Activated CD4-positive, alpha-beta memory T cell treated with anti-CD3 and anti-CD28 coated beads for 36 hours (primary cell): ENCODE measurements at regions of chr5 and their contacts with region 1.

Region 1: DNA sequence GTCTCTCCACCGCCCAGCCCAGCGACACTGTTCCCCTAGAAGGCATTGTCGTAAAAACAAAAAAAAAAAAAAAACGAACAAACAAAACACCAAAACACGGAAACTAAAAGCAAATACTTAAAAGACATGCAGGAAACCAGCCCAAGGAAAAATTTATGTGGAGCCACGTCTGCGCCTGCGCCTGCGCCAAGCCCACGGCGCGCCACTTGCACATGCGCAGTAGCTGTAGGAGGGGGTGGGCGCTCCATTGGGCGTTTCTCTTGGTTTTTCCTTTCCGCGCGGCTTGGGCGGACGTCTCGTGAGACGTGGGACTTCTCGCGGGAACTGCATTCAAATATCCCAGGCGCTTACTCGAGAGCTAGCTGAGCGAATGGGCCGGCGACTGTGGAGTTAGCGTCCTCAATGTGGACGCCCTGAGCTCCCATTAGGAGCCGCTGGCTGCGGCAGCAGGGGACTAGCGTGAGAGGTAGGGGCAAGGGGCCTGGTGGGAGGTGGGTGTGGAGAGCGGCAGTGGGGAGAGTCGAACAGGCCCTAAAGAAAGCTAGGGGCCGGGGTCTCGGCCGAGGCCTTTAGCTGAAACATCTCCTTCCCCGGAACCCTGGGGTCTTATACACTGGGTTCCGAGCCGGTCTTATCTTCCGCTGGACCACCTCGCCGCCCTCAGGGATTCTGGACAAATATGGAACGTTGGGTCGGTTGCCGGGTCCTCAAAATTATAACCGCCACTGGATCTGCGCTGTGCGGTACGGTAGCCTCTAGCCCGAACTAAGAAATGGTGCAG is at the start of gene SPDL1:
- DNase-seq: peak; percentile 97
- H3K4me3 Mint-ChIP-seq: peak within 1 kb of the TSS; percentile 98
- H3K27ac Mint-ChIP-seq: peak within 1 kb of the TSS; percentile 84
- H3K4me1 Mint-ChIP-seq: peaks cover 31% of the 10 kb centered on the region
- H3K27me3 Mint-ChIP-seq: no peaks in the 10 kb centered on the region
- total RNA-seq, gene SPDL1: 32.7 to 34.9 TPM

Region 2: DNA sequence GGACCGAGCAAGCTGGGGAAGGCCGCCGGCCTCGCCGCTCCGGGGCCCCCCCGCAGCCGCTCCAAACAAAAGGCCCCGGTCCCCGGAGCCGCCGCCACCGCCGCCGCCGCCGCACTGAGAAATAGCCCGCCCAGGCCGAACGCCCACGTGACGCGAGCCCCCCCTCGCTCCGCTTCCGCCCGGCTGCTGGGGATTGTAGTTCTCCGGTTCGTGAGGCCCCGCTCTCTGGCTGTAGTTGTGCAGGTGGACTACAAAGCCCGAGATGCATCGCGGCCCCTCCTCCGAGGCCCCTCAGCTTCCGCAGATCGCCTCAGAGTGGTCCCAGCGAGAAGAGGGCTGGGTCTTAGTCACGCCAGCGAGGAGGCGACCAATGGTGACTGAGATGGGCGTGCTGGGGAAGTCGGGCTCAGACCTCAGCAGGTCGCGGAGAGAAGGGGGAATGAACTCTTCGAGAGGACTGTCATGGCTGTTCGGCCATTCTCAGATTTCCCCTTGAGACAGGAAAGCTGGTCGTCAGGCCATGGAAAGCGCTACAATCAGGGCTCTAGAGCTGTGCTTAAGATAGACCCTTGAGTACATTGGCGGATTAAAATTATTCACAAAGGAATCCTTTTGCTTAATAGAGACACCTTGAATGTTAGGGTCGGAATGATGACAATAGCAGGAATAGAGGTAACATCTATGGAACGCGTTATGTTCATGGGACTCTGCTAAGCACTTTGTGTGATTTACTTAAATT is 1004.0 kb before region 1 on chr5:
- CTCF ChIA-PET with region 1: no interaction called
- POLR2A ChIA-PET with region 1: no interaction called
- intact Hi-C with region 1: loop called (anchors 1 kb)
- DNase-seq: peak; percentile 99
- H3K4me3 Mint-ChIP-seq: peak overlapping the region; percentile 81
- H3K27ac Mint-ChIP-seq: peak overlapping the region; percentile 96
- H3K4me1 Mint-ChIP-seq: peaks cover 34% of the 10 kb centered on the region
- H3K27me3 Mint-ChIP-seq: no peaks in the 10 kb centered on the region

Region 3: GRCh38 chr5:168987543-168988300 is 595.9 kb before region 1 on chr5:
- CTCF ChIA-PET with region 1: interaction called, 54 read pairs
- POLR2A ChIA-PET with region 1: no interaction called
- intact Hi-C with region 1: loop called (anchors 1 kb)
- DNase-seq: peak; percentile 69
- H3K4me3 Mint-ChIP-seq: no peak overlapping the region
- H3K27ac Mint-ChIP-seq: no peak overlapping the region
- H3K4me1 Mint-ChIP-seq: no peaks in the 10 kb centered on the region
- H3K27me3 Mint-ChIP-seq: peaks cover 6% of the 10 kb centered on the region

Region 4: DNA sequence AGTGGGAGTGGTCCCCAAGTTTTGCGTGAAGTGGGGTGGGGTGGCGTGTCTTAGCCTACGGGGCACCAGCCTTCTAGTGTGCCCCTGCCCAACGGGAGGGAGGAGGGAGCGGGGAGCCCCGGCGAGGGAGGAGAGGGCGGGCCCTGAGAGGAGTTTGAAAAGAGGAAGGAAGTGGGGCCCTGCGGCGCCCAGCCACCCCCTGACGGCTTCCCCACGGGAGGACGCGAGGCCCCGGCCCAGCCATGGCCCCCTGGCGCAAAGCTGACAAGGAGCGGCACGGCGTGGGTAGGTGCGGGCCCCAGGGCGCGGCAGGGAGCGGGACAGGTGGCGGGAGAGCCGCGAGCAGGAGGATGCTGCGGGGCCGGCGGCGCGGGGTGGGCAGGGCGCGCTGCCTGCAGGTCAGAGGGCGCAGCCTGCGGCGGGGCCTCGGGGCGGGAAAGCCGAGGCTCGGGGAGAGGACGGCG is 53.5 kb after region 1 on chr5 and contains the start of gene DOCK2:
- CTCF ChIA-PET with region 1: interaction called, 7 read pairs
- POLR2A ChIA-PET with region 1: interaction called, 21 read pairs
- intact Hi-C with region 1: loop called (anchors 1 kb)
- DNase-seq: peak; percentile 81
- H3K4me3 Mint-ChIP-seq: peak within 1 kb of the TSS; percentile 85
- H3K27ac Mint-ChIP-seq: peak within 1 kb of the TSS; percentile 90
- H3K4me1 Mint-ChIP-seq: peaks cover 48% of the 10 kb centered on the region
- H3K27me3 Mint-ChIP-seq: peaks cover 1% of the 10 kb centered on the region
- total RNA-seq, gene DOCK2: 191 to 205 TPM

Region 5: DNA sequence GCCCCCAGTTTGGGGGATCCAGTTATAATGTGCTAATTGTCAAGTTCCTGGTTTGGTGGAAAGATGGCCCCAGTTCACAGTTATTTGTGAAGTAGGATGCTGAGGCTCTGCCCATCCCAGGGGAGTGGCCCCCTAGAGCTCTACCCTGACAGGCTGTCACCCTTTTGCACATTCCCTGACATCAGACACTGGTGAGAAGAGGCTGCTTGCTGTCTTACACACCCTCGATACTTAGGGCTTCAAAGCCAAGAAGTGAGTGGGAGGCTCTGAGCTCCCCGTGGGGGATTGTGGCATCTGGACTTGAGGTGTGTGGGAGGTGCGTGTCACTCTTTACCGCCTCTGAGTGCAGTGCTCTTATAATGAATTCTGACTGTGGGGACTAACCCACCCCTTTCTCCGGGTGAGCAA is 221.9 kb after region 1 on chr5:
- CTCF ChIA-PET with region 1: interaction called, 5 read pairs
- POLR2A ChIA-PET with region 1: no interaction called
- intact Hi-C with region 1: loop called (anchors 1 kb)
- DNase-seq: peak; percentile 83
- H3K4me3 Mint-ChIP-seq: peak overlapping the region; percentile 39
- H3K27ac Mint-ChIP-seq: peak overlapping the region; percentile 87
- H3K4me1 Mint-ChIP-seq: peaks cover 57% of the 10 kb centered on the region
- H3K27me3 Mint-ChIP-seq: no peaks in the 10 kb centered on the region